GM10248 (cell line): ENCODE measurements at regions of chr15 and their contacts with region 1.

Region 1: GRCh38 chr15:38631126-38632075 is 66.8 kb upstream of the RASGRP1 start:
- DNase-seq: no peak
- CTCF ChIP-seq: no peak

Region 2: DNA sequence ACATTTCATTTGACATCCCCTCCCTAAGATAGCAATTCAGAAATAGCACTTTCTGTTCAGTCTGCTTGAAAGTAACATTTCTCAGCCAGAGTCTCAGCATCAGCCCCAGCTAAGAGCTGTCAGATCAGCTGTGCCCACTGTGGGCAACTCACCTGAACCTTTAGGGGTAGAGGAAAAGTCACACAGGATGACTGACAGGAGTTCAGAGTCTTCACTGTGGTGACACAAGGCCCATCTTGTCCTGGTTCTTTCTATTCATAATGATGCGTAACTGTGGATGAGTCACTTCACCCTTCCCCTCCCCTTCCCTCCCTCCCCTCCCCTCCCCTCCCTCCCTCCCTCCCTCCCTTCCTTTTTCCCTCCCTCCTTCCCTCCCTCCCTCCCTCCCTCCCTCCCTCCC is 29.3 kb after region 1 on chr15:
- CTCF ChIA-PET with region 1: interaction called, 12 read pairs
- POLR2A ChIA-PET with region 1: no interaction called
- DNase-seq: no peak
- CTCF ChIP-seq: no peak

Region 3: GRCh38 chr15:38671675-38672254 is 40.4 kb after region 1 on chr15:
- CTCF ChIA-PET with region 1: interaction called, 12 read pairs
- POLR2A ChIA-PET with region 1: no interaction called
- DNase-seq: no peak
- CTCF ChIP-seq: peak; percentile 0